CD14-positive monocyte (primary cell): ENCODE measurements at regions of chr1 and their contacts with region 1.

Region 1: DNA sequence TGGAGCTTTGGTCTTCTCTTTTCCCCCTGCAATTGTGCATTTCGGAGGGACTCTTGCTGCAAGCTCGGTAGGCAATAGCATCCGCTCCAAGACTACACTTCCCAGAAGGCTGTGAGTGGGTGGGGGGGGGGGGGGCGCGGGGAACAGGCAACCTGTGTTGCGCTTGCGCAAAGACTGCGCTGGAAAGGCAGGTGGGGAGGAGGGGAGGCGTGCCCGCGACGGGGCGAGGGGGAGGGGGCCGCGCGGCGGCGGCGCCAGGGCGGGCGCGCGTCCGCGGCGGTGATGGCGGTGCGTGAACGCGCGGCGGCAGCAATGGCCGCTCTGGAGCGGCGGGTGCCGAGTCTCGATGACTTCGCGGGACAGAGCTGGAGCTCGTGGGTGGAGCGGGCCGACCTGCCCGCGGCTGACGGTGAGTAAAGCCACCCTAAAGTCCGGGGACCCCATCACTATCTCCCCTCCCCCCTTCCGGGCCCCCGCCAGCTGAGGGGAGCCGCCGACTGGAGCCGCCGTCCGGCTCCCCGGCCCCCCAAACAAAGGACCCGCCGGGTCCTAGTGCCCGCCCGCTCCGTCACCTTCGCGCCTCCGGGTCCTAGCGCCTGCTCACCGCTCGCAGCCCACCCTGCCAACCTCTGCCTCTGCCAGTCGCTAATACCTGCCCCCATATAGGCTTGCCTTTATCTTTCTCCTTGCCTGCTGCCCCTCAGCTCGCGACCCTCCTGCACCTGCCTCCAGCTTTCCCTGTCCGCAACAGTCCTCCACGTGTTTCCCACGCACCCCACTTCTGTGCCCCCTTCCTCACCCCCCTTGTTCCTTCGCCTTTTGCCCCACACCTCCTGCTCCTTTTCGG is at the start of gene ATXN7L2:
- DNase-seq: peak; percentile 88 to 92 (median 88)
- H3K4me3 ChIP-seq: peak within 1 kb of the TSS; percentile 59 to 93 (median 77)
- H3K4me3 Mint-ChIP-seq: peak within 1 kb of the TSS; percentile 89 to 97
- H3K27ac ChIP-seq: peak within 1 kb of the TSS; percentile 71 to 88
- H3K27ac Mint-ChIP-seq: peak within 1 kb of the TSS; percentile 75 to 94 (median 88)
- H3K4me1 ChIP-seq: peaks cover 17 to 19% of the 10 kb centered on the region in 2 donors
- H3K4me1 Mint-ChIP-seq: peaks cover 27% of the 10 kb centered on the region
- H3K27me3 ChIP-seq: peaks cover 8 to 31% of the 10 kb centered on the region in 2 donors
- H3K27me3 Mint-ChIP-seq: peaks cover 30 to 38% (median 31%) of the 10 kb centered on the region in 3 donors
- CTCF ChIP-seq: no peak
- polyA plus RNA-seq, gene ATXN7L2: 1.1 to 3.6 (median 1.7) TPM

Region 2: GRCh38 chr1:109426278-109427170 is 57.4 kb before region 1 on chr1 and contains the start of gene PSMA5:
- intact Hi-C with region 1: loop called (anchors 2 to 5 kb)
- DNase-seq: peak; percentile 97 to 99 (median 99)
- H3K4me3 ChIP-seq: peak within 1 kb of the TSS; percentile 49 to 82 (median 69)
- H3K4me3 Mint-ChIP-seq: peak within 1 kb of the TSS; percentile 91 to 96
- H3K27ac ChIP-seq: peak within 1 kb of the TSS; percentile 88 to 91
- H3K27ac Mint-ChIP-seq: peak within 1 kb of the TSS; percentile 96 to 99 (median 98)
- H3K4me1 ChIP-seq: peaks cover 22 to 26% of the 10 kb centered on the region in 2 donors
- H3K4me1 Mint-ChIP-seq: peaks cover 27% of the 10 kb centered on the region
- H3K27me3 ChIP-seq: no peaks in the 10 kb centered on the region
- H3K27me3 Mint-ChIP-seq: peaks cover 0 to 2% (median under 1%) of the 10 kb centered on the region in 3 donors
- CTCF ChIP-seq: no peak
- polyA plus RNA-seq, gene PSMA5: 36.6 to 119 (median 118) TPM